ENCODE measurements at regions of chr12 and their contacts with region 1.

Region 1: GRCh38 chr12:47079468-47079980 is at the starts of genes AMIGO2 and PCED1B:
- DNase-seq: peak; percentile 82
- H3K4me3 Mint-ChIP-seq: peak within 1 kb of the TSS; percentile 92
- H3K27ac Mint-ChIP-seq: peak within 1 kb of the TSS; percentile 77
- H3K4me1 Mint-ChIP-seq: peaks cover 68% of the 10 kb centered on the region
- H3K27me3 Mint-ChIP-seq: no peaks in the 10 kb centered on the region
- CTCF ChIP-seq: peak; percentile 72
- total RNA-seq, gene AMIGO2: 13.0 and 32.6 TPM in 2 replicates
- total RNA-seq, gene PCED1B: 5.1 and 9.6 TPM in 2 replicates

Region 2: GRCh38 chr12:47004634-47005033 is 74.9 kb before region 1 on chr12:
- CTCF ChIA-PET with region 1: no interaction called
- POLR2A ChIA-PET with region 1: no interaction called
- intact Hi-C with region 1: no loop called
- DNase-seq: no peak
- H3K4me3 Mint-ChIP-seq: no peak overlapping the region
- H3K27ac Mint-ChIP-seq: no peak overlapping the region
- H3K4me1 Mint-ChIP-seq: no peaks in the 10 kb centered on the region
- H3K27me3 Mint-ChIP-seq: no peaks in the 10 kb centered on the region
- CTCF ChIP-seq: no peak

Region 3: GRCh38 chr12:47095446-47096236 is 16.1 kb after region 1 on chr12:
- CTCF ChIA-PET with region 1: interaction called, 10 read pairs
- POLR2A ChIA-PET with region 1: interaction called, 79 read pairs
- intact Hi-C with region 1: no loop called
- DNase-seq: peak; percentile 47
- H3K4me3 Mint-ChIP-seq: peak overlapping the region; percentile 43
- H3K27ac Mint-ChIP-seq: peak overlapping the region; percentile 91
- H3K4me1 Mint-ChIP-seq: peaks cover 39% of the 10 kb centered on the region
- H3K27me3 Mint-ChIP-seq: no peaks in the 10 kb centered on the region
- CTCF ChIP-seq: no peak

Region 4: GRCh38 chr12:47270782-47271664 is 191.5 kb after region 1 on chr12:
- CTCF ChIA-PET with region 1: no interaction called
- POLR2A ChIA-PET with region 1: interaction called, 41 read pairs
- intact Hi-C with region 1: loop called (anchors 1 kb)
- DNase-seq: peak; percentile 87
- H3K4me3 Mint-ChIP-seq: peak overlapping the region; percentile 33
- H3K27ac Mint-ChIP-seq: peak overlapping the region; percentile 87
- H3K4me1 Mint-ChIP-seq: peaks cover 61% of the 10 kb centered on the region
- H3K27me3 Mint-ChIP-seq: no peaks in the 10 kb centered on the region
- CTCF ChIP-seq: no peak

Region 5: DNA sequence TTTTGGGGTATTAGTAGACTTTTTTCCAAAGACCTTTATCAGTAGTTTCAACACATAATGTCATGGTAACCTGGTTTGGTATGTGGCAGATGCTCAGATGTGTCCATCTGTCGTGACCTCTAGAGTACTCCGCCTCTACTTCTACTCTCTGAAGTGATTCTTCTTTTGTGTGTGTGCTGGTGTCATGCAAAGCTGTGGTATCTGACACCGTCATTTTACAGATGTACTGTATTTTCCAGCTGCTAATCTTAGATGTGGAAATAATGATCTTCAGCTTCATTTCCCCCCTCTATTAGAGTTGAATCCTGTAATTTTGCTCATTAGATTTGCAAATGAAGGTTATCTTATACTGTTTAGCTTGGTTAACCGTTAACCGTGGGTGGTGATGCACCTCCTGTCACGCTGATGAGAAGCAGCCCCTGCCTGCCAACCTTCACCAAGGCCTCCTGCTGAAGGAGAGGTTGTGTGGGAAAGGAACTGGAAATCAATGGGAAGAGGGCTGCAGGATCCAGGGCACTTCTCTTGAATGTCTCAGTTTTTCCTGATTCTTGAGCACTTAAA is 222.7 kb after region 1 on chr12:
- CTCF ChIA-PET with region 1: interaction called, 24 read pairs
- POLR2A ChIA-PET with region 1: interaction called, 19 read pairs
- intact Hi-C with region 1: loop called (anchors 1 kb)
- DNase-seq: no peak
- H3K4me3 Mint-ChIP-seq: no peak overlapping the region
- H3K27ac Mint-ChIP-seq: no peak overlapping the region
- H3K4me1 Mint-ChIP-seq: peaks cover 6% of the 10 kb centered on the region
- H3K27me3 Mint-ChIP-seq: no peaks in the 10 kb centered on the region
- CTCF ChIP-seq: no peak

Region 6: GRCh38 chr12:47397664-47398281 is 318.2 kb after region 1 on chr12:
- CTCF ChIA-PET with region 1: interaction called, 17 read pairs
- POLR2A ChIA-PET with region 1: interaction called, 8 read pairs
- intact Hi-C with region 1: loop called (anchors 1 kb)
- DNase-seq: peak; percentile 77
- H3K4me3 Mint-ChIP-seq: no peak overlapping the region
- H3K27ac Mint-ChIP-seq: no peak overlapping the region
- H3K4me1 Mint-ChIP-seq: no peaks in the 10 kb centered on the region
- H3K27me3 Mint-ChIP-seq: no peaks in the 10 kb centered on the region
- CTCF ChIP-seq: peak; percentile 66

Region 7: DNA sequence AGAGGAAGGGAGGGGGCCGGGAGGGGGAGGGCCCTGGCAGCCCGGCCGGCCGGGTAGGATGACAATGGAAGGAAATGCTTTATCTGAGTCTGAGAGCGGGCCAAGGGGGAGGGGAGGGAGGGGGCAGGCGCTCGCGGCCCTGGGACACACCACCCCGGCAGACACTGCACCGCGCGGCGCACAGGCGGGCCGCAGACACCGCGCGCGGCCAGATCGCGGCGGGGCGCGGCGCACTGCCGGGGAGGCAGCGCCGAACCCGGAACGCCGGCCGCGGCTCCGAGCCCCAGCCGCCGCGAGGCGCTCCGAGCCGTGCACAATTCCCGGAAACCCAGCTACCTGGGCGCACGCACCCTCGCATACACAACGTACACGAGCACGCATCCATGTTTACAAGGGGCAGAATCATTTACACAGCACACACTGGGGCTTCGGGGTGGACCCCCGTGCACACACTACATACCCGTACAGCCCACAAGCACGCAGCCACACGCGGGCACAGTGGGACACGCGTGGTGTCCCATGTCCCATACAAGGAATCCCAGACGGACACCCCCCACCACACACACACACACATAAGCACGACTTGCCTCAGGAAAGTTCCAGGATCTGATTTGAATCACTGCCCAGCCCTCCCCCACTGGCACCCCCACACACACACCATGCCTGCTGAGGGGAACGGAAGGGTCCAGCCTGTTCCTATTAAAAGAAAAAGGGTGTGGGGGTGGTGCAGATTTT is 740.5 kb after region 1 on chr12 and contains the start of gene HDAC7:
- CTCF ChIA-PET with region 1: no interaction called
- POLR2A ChIA-PET with region 1: no interaction called
- intact Hi-C with region 1: loop called (anchors 10 kb)
- DNase-seq: peak; percentile 81
- H3K4me3 Mint-ChIP-seq: peak within 1 kb of the TSS; percentile 98
- H3K27ac Mint-ChIP-seq: peak within 1 kb of the TSS; percentile 93
- H3K4me1 Mint-ChIP-seq: peaks cover 73% of the 10 kb centered on the region
- H3K27me3 Mint-ChIP-seq: no peaks in the 10 kb centered on the region
- CTCF ChIP-seq: no peak
- total RNA-seq, gene HDAC7: 65.0 and 80.1 TPM in 2 replicates